ENCODE measurements at regions of chr5 and their contacts with region 1.

Region 1: DNA sequence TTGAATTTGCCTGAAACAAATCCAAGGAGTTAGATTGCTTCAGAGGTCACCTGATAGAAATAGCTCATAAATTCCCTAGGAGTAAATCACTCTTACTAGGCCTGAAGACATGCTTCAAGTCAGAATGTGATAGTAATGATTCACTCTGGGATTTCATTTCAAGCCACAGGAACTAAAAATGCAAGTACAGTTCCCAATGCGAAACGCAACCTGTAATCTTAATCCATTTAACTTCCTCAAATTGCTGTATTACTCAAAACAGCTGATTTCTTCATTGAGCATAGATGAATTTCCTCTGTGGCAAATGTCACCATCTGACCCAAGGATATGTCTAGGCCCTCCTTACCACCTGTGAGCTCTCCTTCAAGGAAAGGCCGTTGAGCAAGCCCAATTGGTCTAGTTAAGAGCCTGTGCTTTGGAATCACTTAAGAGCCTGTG is 32.1 kb upstream of the IL6ST start:
- DNase-seq: peak; percentile 72
- H3K4me3 ChIP-seq: no peak overlapping the region
- H3K27ac ChIP-seq: peak overlapping the region; percentile 76
- H3K27me3 ChIP-seq: no peaks in the 10 kb centered on the region
- CTCF ChIP-seq: no peak

Region 2: DNA sequence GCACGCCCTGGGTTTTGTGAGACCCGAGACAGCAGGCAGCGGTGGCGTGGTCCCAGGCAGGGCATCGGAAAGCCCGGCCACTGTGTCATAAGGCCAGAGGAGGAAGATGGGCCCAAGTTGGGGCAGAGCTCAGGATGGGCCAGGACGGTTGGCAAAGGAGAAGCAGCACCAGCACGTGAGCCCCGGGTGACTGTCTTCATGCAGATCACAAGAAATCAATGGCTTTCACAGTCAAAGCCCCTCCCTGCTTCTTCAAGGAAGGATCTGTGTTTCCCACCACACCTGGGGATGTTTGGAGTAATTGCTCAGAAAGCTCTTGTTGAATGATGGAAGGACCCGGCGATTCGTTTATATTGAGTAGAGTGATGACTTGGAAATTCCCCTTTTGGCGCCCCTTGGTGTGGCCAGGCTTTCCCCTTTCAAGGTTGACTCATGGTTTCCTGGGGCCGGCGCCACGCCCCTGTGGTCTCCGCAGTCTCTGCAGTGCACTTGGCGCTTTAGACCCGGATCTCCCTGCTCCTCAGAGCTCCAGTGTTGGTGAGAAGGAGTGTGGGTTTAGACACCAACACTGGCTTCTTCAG is 123.7 kb before region 1 on chr5:
- CTCF ChIA-PET with region 1: no interaction called
- POLR2A ChIA-PET with region 1: no interaction called
- DNase-seq: no peak
- H3K4me3 ChIP-seq: no peak overlapping the region
- H3K27ac ChIP-seq: no peak overlapping the region
- H3K27me3 ChIP-seq: no peaks in the 10 kb centered on the region
- CTCF ChIP-seq: no peak

Region 3: DNA sequence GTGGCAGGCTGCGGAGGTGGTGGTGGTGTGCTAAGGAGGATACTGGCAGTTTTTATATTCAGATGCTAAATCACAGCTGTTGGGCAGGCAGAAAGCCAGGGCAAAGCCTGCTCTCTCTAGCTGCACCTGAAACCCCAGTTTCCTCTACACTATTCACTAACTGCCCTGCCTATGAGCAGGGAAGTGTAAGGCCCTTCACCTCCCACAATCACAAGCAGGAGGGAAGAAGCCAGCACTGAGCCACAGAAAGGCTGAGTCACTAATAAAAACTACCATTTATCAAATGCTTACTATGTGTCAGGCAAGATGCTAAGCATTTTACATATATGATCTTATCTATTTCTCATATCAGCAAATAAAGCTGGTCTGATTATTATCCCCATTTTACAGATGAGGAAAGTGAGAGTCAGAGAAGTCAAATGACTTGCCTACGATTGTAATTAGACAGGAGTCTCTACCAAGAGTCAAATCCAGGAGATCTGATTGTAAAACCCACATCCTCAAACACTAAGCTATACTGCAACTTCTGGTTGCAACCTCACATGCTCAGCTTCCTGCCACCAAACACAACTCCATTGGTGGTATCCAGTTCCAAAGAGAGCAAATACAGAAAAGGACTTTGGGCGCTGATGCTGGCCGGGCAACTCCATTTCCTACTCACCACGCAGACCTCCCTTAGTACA is 14.5 kb before region 1 on chr5:
- CTCF ChIA-PET with region 1: no interaction called
- POLR2A ChIA-PET with region 1: interaction called, 10 read pairs
- DNase-seq: no peak
- H3K4me3 ChIP-seq: no peak overlapping the region; the same call in 1 of the 2 replicates
- H3K27ac ChIP-seq: peak overlapping the region; percentile 94
- H3K27me3 ChIP-seq: no peaks in the 10 kb centered on the region
- CTCF ChIP-seq: no peak